Right ventricle myocardium inferior (tissue), 1 donor: ENCODE measurements at regions of chr6 and their contacts with region 1.

Region 1: DNA sequence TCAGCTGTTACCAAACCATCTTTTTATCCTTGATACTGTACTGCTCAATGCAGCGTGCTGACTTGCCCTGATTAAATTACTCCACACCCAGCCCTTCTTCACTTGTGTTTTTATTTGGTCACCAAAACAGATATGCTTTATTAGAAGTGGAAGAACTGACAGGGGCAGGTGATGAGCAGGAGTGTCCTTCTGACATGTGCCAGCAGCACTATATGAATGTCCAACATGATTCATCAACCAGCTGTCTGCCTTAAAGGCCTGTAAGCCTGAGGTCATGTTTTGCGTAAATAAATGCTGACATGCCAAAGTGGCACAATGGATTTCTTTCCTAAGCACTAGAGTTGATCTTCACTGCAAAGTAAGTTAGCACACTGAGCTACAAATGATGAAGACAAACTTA is 15.4 kb downstream of the POPDC3 start:
- DNase-seq: no peak
- ATAC-seq: peak; percentile 93

Region 2: GRCh38 chr6:105136431-105137350 is 27.7 kb before region 1 on chr6:
- intact Hi-C with region 1: loop called (anchors 2 kb)
- DNase-seq: peak; percentile 78
- ATAC-seq: peak; percentile 85

Region 3: DNA sequence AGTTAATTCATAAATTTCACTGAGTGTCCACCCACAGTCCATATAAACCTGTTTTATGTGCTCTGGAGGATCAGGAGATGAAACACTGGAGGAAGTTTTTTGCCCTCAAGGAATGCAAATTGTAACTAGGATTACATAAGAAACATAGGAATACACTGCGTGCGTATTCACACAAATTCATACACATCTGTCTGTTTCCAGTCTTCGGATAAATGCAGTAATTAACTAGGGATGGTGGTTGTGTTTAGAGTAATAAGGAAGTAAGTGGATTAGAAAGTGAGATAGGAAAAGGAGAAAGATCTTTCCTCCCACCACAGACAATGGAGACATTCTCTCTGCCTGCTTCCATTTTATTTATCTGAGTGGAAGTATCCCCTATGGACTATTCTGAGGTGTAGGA is 51.1 kb after region 1 on chr6:
- intact Hi-C with region 1: no loop called
- DNase-seq: no peak
- ATAC-seq: no peak

Region 4: DNA sequence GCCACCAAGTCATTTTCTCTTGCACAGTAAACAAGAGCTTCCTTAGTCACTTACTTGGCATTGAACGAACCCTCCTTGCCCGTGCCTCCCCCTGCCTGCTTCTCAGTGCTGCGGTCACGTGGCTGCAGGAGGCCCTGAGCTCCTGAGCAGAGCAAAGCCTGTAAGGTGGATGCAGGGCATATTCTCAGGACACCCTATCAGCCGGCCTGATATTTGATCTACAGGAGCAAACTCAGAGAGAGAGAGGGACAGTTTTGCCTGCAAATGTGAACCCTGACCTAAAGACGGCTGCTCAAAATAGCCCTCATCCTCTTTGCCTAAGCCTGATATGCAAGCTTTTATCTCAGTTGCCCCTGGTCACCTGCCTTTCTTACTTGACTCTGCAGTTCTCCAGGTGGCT is 108.4 kb after region 1 on chr6:
- intact Hi-C with region 1: loop called (anchors 10 kb)
- DNase-seq: no peak
- ATAC-seq: peak; percentile 75

Region 5: DNA sequence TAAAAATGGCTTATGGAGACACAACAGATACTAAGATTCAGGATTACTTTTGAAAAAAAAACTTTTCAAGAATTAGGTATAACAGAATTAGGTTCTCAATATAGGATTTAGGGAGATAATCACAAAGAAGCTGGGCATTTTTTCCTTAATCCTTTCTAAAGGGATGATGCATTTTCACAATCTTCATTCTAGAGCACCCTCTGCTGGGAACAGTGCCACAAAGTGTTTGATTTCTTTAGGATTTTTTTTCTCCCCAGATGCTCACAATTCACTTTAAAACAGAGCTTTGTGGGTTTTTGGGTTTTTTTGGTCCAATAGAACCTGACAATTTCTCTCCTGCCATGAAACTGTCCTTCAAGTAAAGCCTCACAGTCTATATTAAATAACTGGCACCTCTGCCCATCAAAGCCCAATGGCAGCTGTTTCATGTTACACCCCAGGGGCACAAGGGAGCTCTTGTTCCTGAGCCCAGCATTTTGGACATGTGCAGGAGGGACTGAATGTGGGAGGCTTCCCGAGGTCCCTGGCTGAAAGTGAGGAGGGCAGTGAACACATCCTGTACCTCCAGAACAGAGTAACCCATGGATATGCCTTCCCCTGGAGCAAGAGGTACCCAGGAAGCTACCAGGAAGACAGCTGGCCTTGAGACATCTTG is 198.8 kb after region 1 on chr6:
- intact Hi-C with region 1: no loop called
- DNase-seq: no peak
- ATAC-seq: no peak